ENCODE measurements at regions of chr15 and their contacts with region 1.

Region 1: GRCh38 chr15:40893733-40894688 is at the start of gene VPS18:
- DNase-seq: peak; percentile 100
- H3K4me3 ChIP-seq: peak within 1 kb of the TSS; percentile 84 to 98 (median 88)
- H3K27ac ChIP-seq: peak within 1 kb of the TSS; percentile 58 to 92 (median 90)
- H3K4me1 ChIP-seq: peaks cover 11 to 60% (median 43%) of the 10 kb centered on the region in 6 donors
- H3K27me3 ChIP-seq: no peaks in the 10 kb centered on the region
- CTCF ChIP-seq: peak; percentile 99 to 100 (median 100)
- POLR2A ChIP-seq: peak in 1 of 3 donors; percentile 66
- total RNA-seq, gene VPS18: 18.6 to 29.1 (median 25.3) TPM

Region 2: DNA sequence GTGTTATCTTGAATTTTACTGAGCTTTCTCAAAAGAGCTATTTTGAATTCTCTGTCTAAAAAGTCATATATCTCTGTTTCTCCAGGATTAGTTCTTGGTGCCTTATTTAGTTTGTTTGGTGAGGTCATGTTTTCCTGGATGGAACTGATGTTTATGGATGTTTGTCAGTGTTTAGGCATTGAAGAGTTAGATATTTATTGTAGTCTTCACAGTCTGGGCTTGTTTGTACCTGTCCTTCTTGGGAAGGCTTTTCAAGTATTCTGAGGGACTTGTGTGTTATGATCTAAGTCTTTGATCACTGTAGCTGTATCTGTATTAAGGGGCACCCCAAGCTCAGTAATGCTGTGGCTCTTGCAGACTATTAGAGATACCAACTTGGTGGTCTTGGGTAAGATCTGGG is 209.6 kb before region 1 on chr15:
- intact Hi-C with region 1: loop called (anchors 5 kb)
- DNase-seq: no peak
- H3K4me3 ChIP-seq: no peak overlapping the region
- H3K27ac ChIP-seq: no peak overlapping the region
- H3K4me1 ChIP-seq: peaks cover 0 to 17% (median under 1%) of the 10 kb centered on the region in 6 donors
- H3K27me3 ChIP-seq: no peaks in the 10 kb centered on the region
- CTCF ChIP-seq: no peak
- POLR2A ChIP-seq: no peak

Region 3: DNA sequence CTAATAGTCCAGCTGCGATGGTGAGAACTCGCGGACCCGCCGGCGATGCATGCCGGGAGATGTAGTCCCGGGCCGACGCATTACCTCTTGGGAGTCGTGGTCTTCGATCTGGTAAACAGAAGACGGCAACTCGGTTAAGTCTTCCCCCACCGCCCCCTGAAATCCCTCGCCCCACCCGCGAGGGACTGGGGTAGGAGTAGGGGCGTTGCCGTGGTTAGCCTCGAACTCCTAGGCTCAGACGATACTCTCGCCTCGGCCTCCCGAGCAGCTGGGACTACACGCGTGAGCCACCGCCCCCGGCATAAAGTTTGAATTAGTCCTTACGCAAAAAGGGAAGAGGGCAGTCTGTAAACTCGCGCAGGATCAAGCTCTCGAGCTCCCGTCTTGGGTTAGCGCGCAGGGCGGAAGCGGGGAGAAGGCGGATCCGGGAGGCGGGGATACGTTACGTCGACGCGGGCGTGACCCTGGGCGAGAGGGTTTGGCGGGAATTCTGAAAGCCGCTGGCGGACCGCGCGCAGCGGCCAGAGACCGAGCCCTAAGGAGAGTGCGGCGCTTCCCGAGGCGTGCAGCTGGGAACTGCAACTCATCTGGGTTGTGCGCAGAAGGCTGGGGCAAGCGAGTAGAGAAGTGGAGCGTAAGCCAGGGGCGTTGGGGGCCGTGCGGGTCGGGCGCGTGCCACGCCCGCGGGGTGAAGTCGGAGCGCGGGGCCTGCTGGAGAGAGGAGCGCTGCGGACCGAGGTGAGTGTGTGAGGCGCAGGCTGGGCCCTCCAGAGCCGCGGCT is 199.1 kb before region 1 on chr15 and contains the start of gene RAD51:
- intact Hi-C with region 1: loop called (anchors 5 kb)
- DNase-seq: peak; percentile 98
- H3K4me3 ChIP-seq: peak within 1 kb of the TSS; percentile 61 to 97 (median 84)
- H3K27ac ChIP-seq: peak within 1 kb of the TSS; percentile 95 to 100 (median 99)
- H3K4me1 ChIP-seq: peaks cover 15 to 36% (median 24%) of the 10 kb centered on the region in 6 donors
- H3K27me3 ChIP-seq: no peaks in the 10 kb centered on the region
- CTCF ChIP-seq: peak in 2 of 11 experiments; percentile 4 to 19
- POLR2A ChIP-seq: peak in 2 of 3 donors; percentile 33 to 61
- total RNA-seq, gene RAD51: 0.43 to 5.5 (median 3.0) TPM

Region 4: DNA sequence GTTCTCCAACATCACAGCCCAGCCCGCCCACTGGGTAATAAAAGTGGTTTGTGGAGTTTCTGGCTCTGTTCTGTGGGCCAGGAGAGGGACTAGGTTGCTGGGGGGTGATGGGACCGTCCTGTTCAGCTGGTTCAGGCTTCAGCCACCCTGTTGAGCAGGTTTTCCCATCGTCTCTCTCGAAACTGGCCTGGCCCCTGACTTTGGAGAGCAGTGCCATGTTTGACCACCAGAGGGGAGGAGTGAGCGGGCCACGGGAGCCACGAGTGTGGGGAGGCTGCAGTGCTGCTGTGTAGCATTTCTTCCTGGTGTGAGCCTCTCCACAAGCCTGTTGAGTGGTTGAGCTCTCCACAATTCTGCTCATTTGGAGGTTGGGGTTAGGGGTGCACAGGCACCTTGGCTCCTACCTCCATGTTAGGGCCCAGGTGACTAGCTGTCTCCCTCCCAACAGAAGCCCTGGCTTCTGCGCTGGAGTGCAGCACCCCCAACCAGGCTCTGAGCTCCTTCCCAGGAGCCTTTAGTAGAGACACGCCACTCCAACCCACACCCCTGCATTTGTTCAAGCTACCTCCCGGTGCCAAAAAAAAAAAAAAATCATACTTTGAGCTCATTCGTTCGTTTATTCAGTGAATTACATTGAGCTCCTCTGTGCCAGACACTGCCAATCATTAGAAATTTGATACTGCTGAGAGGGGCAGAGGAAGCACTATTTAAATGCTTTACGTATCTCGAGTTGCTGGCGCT is 36.2 kb before region 1 on chr15:
- intact Hi-C with region 1: loop called (anchors 2 kb)
- DNase-seq: peak; percentile 93
- H3K4me3 ChIP-seq: no peak overlapping the region
- H3K27ac ChIP-seq: no peak overlapping the region
- H3K4me1 ChIP-seq: peaks cover 0 to 21% (median 12%) of the 10 kb centered on the region in 6 donors
- H3K27me3 ChIP-seq: no peaks in the 10 kb centered on the region
- CTCF ChIP-seq: peak; percentile 85 to 97 (median 93)
- POLR2A ChIP-seq: no peak

Region 5: GRCh38 chr15:41061667-41062066 is 167.7 kb after region 1 on chr15:
- intact Hi-C with region 1: no loop called
- DNase-seq: no peak
- H3K4me3 ChIP-seq: no peak overlapping the region
- H3K27ac ChIP-seq: no peak overlapping the region
- H3K4me1 ChIP-seq: no peaks in the 10 kb centered on the region
- H3K27me3 ChIP-seq: no peaks in the 10 kb centered on the region
- CTCF ChIP-seq: no peak
- POLR2A ChIP-seq: no peak

Region 6: DNA sequence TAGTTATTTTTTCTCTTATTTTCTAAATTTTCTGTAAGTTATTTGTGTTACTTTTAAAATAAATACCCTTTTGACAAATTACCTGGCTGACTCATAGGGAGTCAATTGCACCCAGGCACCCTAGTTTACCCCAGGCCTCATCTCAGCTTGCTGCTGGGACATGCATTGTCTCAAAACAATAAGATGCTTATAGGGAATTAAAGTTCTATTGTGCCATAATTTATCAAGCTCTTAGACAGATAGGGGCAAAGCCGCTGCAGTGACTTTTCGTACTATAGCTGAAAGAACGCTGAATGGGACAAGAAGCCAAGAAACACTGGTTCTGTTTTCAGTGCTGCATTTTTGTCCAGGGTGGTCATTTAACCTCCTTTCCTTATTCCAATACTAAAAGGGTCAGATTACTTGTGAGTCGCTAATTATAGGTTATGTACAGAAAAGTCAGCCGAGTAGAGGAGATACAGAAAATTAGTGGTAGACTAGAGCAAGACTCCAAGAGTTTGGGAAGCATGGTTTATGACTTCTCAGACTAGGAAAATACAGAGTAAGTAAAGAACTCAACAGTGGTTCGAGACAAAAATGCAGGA is 286.3 kb after region 1 on chr15:
- intact Hi-C with region 1: loop called (anchors 5 kb)
- DNase-seq: no peak
- H3K4me3 ChIP-seq: no peak overlapping the region
- H3K27ac ChIP-seq: no peak overlapping the region
- H3K4me1 ChIP-seq: peaks cover 0 to 9% (median 0%) of the 10 kb centered on the region in 6 donors
- H3K27me3 ChIP-seq: no peaks in the 10 kb centered on the region
- CTCF ChIP-seq: no peak
- POLR2A ChIP-seq: no peak

Region 7: DNA sequence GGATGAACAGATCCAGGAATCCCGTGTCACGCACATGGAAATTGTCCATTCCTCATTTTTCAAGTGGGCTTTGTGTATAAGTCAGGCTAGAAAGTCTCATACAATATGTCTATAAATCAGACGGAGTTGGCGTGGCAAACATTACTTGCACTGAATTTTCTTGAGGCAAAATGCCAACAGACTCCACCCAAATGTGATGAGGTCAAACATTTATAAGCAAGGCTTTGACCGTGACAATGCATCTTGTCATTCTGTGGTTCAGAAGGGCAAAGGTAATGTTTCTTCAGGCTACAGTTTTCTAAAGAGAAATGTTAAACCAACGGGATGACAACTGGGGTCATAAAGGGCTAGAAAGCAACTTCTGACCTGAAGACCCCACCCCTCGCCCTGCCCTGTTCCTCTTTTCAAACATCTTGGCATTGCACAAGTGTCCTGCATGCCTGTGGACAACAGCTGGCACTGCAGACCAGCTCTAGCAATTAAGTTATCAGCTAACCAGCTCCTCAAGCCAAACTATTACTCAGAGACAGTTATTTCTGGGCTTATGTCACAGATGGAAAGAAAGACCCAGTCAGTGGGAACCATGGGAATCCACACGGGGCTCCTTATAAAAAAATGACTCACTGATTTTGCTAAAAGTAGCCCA is 1036.3 kb after region 1 on chr15:
- intact Hi-C with region 1: no loop called
- DNase-seq: no peak
- H3K4me3 ChIP-seq: no peak overlapping the region
- H3K27ac ChIP-seq: peak overlapping the region in 4 of 8 donors; percentile 58 to 79 (median 75)
- H3K4me1 ChIP-seq: peaks cover 44 to 98% (median 83%) of the 10 kb centered on the region in 6 donors
- H3K27me3 ChIP-seq: no peaks in the 10 kb centered on the region
- CTCF ChIP-seq: peak in 1 of 11 experiments; percentile 19
- POLR2A ChIP-seq: no peak